Activated B cell treated with CpG ODN at 0.5 μM for 24 hours (primary cell): ENCODE measurements at regions of chr6 and their contacts with region 1.

Region 1: DNA sequence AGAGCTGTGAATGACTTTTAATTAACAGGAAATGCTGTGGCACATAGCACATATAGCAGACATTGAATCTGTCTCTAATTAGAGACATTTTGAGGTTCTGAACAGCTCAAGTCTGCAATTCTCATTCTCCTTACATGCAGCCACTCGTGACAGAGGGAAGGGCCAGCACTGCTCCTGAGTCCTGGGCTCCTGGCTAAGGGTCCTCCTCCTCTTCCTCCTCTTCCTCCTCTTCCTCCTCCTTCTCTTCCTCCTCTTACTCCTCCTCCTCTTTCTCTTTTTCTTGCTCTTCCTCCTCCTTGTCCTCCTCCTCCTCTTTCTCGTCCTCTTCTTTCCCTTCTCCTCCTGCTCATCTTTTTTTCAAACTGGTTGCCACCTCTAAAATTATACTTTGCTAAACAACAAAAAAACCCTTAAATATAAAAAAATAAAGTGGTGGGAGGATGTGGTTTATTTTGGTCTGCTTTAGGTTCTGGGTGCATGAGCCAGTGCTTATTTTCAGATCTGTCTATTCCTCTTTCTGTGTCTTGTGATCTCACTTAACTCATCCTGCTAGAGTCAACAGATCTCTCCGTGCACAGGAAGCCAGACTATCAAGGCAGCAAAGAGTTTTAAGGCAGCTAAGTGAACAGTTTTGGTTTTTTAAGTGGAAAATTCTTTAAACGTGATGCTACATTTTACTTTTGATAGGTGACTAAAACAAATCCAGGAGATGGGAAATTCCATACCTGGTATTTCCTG is 159.3 kb downstream of the CD83 start:
- DNase-seq: no peak
- ATAC-seq: peak; percentile 90
- H3K4me3 Mint-ChIP-seq: peak overlapping the region; percentile 77
- H3K27ac Mint-ChIP-seq: peak overlapping the region; percentile 97
- H3K4me1 Mint-ChIP-seq: peaks cover 88% of the 10 kb centered on the region
- H3K27me3 Mint-ChIP-seq: no peaks in the 10 kb centered on the region
- CTCF ChIP-seq: no peak

Region 2: GRCh38 chr6:14224359-14225103 is 52.3 kb before region 1 on chr6:
- CTCF ChIA-PET with region 1: no interaction called
- POLR2A ChIA-PET with region 1: no interaction called
- intact Hi-C with region 1: loop called (anchors 2 kb)
- DNase-seq: no peak
- ATAC-seq: peak; percentile 81
- H3K4me3 Mint-ChIP-seq: peak overlapping the region; percentile 25
- H3K27ac Mint-ChIP-seq: peak overlapping the region; percentile 73
- H3K4me1 Mint-ChIP-seq: peaks cover 65% of the 10 kb centered on the region
- H3K27me3 Mint-ChIP-seq: no peaks in the 10 kb centered on the region
- CTCF ChIP-seq: no peak

Region 3: GRCh38 chr6:14254505-14254904 is 22.3 kb before region 1 on chr6:
- CTCF ChIA-PET with region 1: no interaction called
- POLR2A ChIA-PET with region 1: no interaction called
- intact Hi-C with region 1: loop called (anchors 2 kb)
- DNase-seq: no peak
- ATAC-seq: peak; percentile 87
- H3K4me3 Mint-ChIP-seq: peak overlapping the region; percentile 58
- H3K27ac Mint-ChIP-seq: peak overlapping the region; percentile 75
- H3K4me1 Mint-ChIP-seq: peaks cover 46% of the 10 kb centered on the region
- H3K27me3 Mint-ChIP-seq: no peaks in the 10 kb centered on the region
- CTCF ChIP-seq: no peak

Region 4: DNA sequence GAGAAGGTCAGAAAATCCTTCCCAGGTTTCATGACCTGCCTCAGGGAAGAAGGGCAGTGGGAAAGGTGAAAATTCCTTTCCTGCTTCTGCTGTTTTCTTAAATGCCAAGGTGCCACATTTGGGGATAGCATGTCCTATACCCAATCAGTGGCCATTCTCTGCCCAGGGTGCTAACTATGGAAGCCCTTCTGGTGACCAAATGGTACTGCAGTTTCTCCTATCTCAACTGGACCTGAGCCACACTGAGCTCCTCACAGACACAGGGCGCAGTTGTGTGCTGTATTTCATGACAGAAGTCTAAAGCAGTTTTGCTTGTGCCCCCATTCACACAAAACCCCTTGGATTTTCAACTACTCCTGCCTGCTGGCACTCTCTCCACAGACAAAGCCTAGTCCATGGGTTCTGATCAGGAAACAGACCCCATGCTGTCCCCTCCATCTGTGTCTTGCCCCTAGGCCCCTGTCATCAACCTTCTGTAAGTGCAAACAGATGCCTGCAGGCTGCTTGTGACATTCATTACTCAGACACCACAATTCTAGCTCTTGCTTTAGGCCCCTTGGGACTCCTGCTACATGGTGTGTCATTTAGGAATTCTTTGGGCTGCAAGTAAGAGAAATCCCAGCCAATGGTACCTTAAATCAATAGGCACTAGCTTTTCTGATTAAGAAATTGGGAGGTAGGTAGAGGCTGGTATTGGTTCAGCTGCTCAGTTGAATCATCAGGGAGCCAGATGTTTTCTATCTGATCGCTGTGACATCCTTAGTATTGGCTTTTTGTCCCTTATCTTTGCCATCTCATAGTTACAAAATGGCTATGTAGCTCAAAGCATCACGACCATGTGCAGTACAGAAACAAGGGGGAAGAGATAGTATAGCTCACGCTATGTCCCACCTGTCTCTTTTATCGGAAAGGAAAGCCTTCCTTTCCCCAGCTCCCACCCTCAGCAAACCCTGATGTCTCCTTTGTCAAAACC is 11.5 kb before region 1 on chr6:
- CTCF ChIA-PET with region 1: interaction called, 3 read pairs
- POLR2A ChIA-PET with region 1: interaction called, 3 read pairs
- intact Hi-C with region 1: loop called (anchors 1 kb)
- DNase-seq: no peak
- ATAC-seq: no peak
- H3K4me3 Mint-ChIP-seq: no peak overlapping the region
- H3K27ac Mint-ChIP-seq: no peak overlapping the region
- H3K4me1 Mint-ChIP-seq: peaks cover 49% of the 10 kb centered on the region
- H3K27me3 Mint-ChIP-seq: no peaks in the 10 kb centered on the region
- CTCF ChIP-seq: no peak

Region 5: DNA sequence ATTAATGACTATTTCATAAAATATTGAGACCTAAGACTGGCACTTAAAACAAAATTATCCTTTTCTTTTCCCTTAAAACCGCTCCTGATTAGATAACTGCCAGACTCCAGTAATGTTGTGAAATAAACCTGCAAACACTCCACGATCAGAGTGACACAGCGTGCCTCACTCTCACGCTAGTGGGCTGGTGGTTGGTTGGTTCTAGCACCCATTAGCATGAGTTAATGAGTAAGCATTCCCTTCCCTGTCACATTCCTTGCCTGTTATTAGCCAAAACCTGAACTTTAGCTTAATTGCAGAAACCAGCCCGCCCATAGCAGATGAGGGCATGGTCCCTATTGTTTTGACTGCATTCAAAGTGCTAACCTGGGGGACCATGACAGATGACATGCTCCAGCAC is 34.1 kb after region 1 on chr6:
- CTCF ChIA-PET with region 1: no interaction called
- POLR2A ChIA-PET with region 1: interaction called, 3 read pairs
- intact Hi-C with region 1: loop called (anchors 1 kb)
- DNase-seq: no peak
- ATAC-seq: no peak
- H3K4me3 Mint-ChIP-seq: no peak overlapping the region
- H3K27ac Mint-ChIP-seq: peak overlapping the region; percentile 87
- H3K4me1 Mint-ChIP-seq: peaks cover 84% of the 10 kb centered on the region
- H3K27me3 Mint-ChIP-seq: no peaks in the 10 kb centered on the region
- CTCF ChIP-seq: no peak